ENCODE measurements at regions of chr20 and their contacts with region 1.

Region 1: GRCh38 chr20:36591854-36592641 is 13.5 kb upstream of the RAB5IF start:
- DNase-seq: no peak
- ATAC-seq: peak in 1 of 4 donors; percentile 68
- H3K4me3 ChIP-seq: no peak overlapping the region
- H3K27ac ChIP-seq: no peak overlapping the region
- H3K4me1 ChIP-seq: no peaks in the 10 kb centered on the region
- H3K27me3 ChIP-seq: no peaks in the 10 kb centered on the region
- CTCF ChIP-seq: peak; percentile 40

Region 2: DNA sequence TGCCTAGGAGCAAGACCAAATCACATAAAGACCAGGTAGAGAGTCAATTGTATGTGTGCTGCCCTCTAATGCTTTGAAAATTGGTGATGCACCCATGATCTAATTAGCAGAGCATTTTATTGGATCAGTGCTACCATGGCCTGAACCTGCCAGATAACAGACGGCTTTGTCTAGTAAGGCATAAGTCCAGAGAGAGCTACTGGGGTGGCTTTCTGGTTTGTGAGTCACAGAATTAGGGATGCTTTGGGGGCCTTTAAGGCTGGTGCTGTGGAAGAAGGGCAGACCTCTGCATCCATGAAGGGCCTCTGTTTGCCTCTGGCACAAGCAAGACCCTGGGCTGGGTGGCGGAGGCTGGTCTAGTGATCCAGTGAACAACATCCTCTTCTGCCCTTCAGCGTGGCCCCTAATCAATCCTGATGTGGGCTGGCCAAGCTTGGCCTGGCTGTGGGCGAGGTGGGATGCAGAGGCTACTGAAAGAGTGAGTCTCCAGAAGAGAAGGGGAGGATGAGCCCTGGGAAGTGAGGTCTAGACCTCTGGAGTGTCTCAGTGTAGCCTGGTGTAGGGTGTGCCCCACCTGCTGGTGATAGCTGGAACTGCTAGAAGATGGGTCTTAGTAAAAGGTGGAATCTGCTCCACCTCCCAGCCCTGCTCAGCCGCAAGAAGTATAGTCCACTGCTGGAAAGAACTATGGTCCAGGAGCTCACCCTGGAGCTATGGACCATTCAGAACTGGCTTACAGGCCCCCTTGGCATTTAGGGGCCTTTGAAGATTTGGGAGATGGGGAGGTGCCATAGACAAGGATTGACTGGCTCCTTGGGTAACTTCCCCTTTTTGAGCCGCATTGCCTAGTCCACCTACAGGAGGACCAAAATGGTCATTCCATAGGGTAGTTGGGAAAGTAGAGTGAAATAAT is 392.4 kb before region 1 on chr20:
- intact Hi-C with region 1: loop called in 1 of 2 experiments (anchors 10 kb)
- DNase-seq: peak; percentile 75 to 81
- ATAC-seq: peak; percentile 84 to 92 (median 86)
- H3K4me3 ChIP-seq: no peak overlapping the region
- H3K27ac ChIP-seq: no peak overlapping the region
- H3K4me1 ChIP-seq: no peaks in the 10 kb centered on the region
- H3K27me3 ChIP-seq: no peaks in the 10 kb centered on the region
- CTCF ChIP-seq: peak; percentile 94

Region 3: GRCh38 chr20:36214684-36215256 is 377.3 kb before region 1 on chr20:
- intact Hi-C with region 1: loop called (anchors 10 kb)
- DNase-seq: no peak
- ATAC-seq: peak in 2 of 4 donors; percentile 54 to 69
- H3K4me3 ChIP-seq: no peak overlapping the region
- H3K27ac ChIP-seq: no peak overlapping the region
- H3K4me1 ChIP-seq: no peaks in the 10 kb centered on the region
- H3K27me3 ChIP-seq: no peaks in the 10 kb centered on the region
- CTCF ChIP-seq: peak; percentile 48

Measured in psoas muscle (tissue), 8 donors.